A549 (cell line): ENCODE measurements at regions of chr5 and their contacts with region 1.

Region 1: GRCh38 chr5:72268753-72269410 is 51.2 kb downstream of the MRPS27 start:
- DNase-seq: peak in 1 of 2 experiments; percentile 57
- ATAC-seq: peak in 1 of 2 experiments; percentile 75; a peak in 3 of 6 replicates
- H3K4me3 ChIP-seq: no peak overlapping the region
- H3K27ac ChIP-seq: peak overlapping the region in 1 of 2 experiments; percentile 23; a peak in 1 of 6 replicates
- H3K4me1 ChIP-seq: peaks cover 19% of the 10 kb centered on the region
- CTCF ChIP-seq: peak; percentile 67
- EP300 ChIP-seq: no peak
- POLR2A ChIP-seq: no peak
- RAD21 ChIP-seq: peak; percentile 50 to 53; a peak in 3 of 5 replicates

Region 2: GRCh38 chr5:71922584-71923106 is 346.2 kb before region 1 on chr5:
- CTCF ChIA-PET with region 1: no interaction called
- POLR2A ChIA-PET with region 1: no interaction called
- DNase-seq: peak; percentile 49 to 89
- ATAC-seq: peak; percentile 83 to 90
- H3K4me3 ChIP-seq: no peak overlapping the region
- H3K27ac ChIP-seq: peak overlapping the region; percentile 81 to 83
- H3K4me1 ChIP-seq: peaks cover 44% of the 10 kb centered on the region
- CTCF ChIP-seq: peak; percentile 25; the same call in 2 of the 3 replicates
- EP300 ChIP-seq: no peak; a peak in 1 of 5 replicates
- POLR2A ChIP-seq: no peak
- RAD21 ChIP-seq: peak; percentile 52 to 57

Region 3: DNA sequence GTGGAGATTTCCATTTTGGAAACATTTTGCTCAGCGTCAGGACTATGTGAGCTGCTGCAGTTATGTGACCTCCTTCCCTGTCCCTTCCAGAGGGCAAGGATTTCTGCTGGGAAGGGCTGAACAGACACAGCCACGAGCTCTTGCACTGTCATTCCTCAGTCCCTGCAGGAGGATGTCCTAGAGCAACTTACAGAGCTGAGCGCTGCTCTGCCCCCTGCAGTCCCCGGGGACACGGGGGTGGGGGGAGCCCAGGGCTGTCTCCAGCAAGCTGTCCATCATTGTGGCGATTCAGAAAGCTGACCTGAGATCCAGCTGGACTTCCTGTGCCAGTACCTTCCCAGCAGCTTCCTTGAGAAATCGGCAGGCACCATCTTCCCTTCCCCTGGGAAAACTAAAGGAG is 189.6 kb before region 1 on chr5:
- CTCF ChIA-PET with region 1: no interaction called
- POLR2A ChIA-PET with region 1: no interaction called
- DNase-seq: peak; percentile 16 to 52
- ATAC-seq: peak; percentile 91 to 94
- H3K4me3 ChIP-seq: no peak overlapping the region
- H3K27ac ChIP-seq: peak overlapping the region; percentile 48 to 75
- H3K4me1 ChIP-seq: peaks cover 22% of the 10 kb centered on the region
- CTCF ChIP-seq: no peak
- EP300 ChIP-seq: no peak
- POLR2A ChIP-seq: no peak
- RAD21 ChIP-seq: peak in 1 of 2 experiments; percentile 26; a peak in 2 of 5 replicates

Region 4: GRCh38 chr5:72244862-72245371 is 24.0 kb before region 1 on chr5:
- CTCF ChIA-PET with region 1: interaction called, 11 read pairs
- POLR2A ChIA-PET with region 1: no interaction called
- DNase-seq: peak; percentile 19 to 70
- ATAC-seq: peak; percentile 90 to 92
- H3K4me3 ChIP-seq: no peak overlapping the region
- H3K27ac ChIP-seq: 0 out of 6 replicates have a peak overlapping the region, but pooled peaks of 1 of the 2 experiments have one; percentile 12
- H3K4me1 ChIP-seq: peaks cover 52% of the 10 kb centered on the region
- CTCF ChIP-seq: peak; percentile 47; the same call in 2 of the 3 replicates
- EP300 ChIP-seq: no peak
- POLR2A ChIP-seq: no peak
- RAD21 ChIP-seq: peak; percentile 52 to 55

Region 5: GRCh38 chr5:72280581-72281170 is 11.8 kb after region 1 on chr5:
- CTCF ChIA-PET with region 1: interaction called, 11 read pairs
- POLR2A ChIA-PET with region 1: interaction called, 3 read pairs
- DNase-seq: peak; percentile 55 to 63
- ATAC-seq: peak; percentile 90 to 91
- H3K4me3 ChIP-seq: no peak overlapping the region
- H3K27ac ChIP-seq: peak overlapping the region; percentile 83; a peak in 5 of 6 replicates
- H3K4me1 ChIP-seq: peaks cover 34% of the 10 kb centered on the region
- CTCF ChIP-seq: peak; percentile 49
- EP300 ChIP-seq: no peak
- POLR2A ChIP-seq: no peak
- RAD21 ChIP-seq: peak; percentile 49 to 55